Transverse colon (tissue), 4 donors: ENCODE measurements at regions of chr11 and their contacts with region 1.

Region 1: GRCh38 chr11:1541474-1542204 is 30.4 kb downstream of the DUSP8 start:
- DNase-seq: no peak
- H3K4me3 ChIP-seq: no peak overlapping the region
- H3K27ac ChIP-seq: no peak overlapping the region
- H3K4me1 ChIP-seq: peaks cover 0 to 17% (median 12%) of the 10 kb centered on the region in 4 donors
- H3K27me3 ChIP-seq: peaks cover 13% of the 10 kb centered on the region
- CTCF ChIP-seq: no peak
- EP300 ChIP-seq: no peak
- POLR2A ChIP-seq: no peak

Region 2: GRCh38 chr11:1628506-1629325 is 87.1 kb after region 1 on chr11:
- in situ Hi-C with region 1: no loop called
- intact Hi-C with region 1: loop called (anchors 2 kb)
- DNase-seq: peak; percentile 64
- H3K4me3 ChIP-seq: no peak overlapping the region
- H3K27ac ChIP-seq: no peak overlapping the region
- H3K4me1 ChIP-seq: peaks cover 0 to 7% (median 1%) of the 10 kb centered on the region in 4 donors
- H3K27me3 ChIP-seq: peaks cover 32% of the 10 kb centered on the region
- CTCF ChIP-seq: peak; percentile 83 to 96 (median 89)
- EP300 ChIP-seq: no peak
- POLR2A ChIP-seq: no peak

Region 3: GRCh38 chr11:2074266-2074825 is 532.7 kb after region 1 on chr11:
- in situ Hi-C with region 1: no loop called
- intact Hi-C with region 1: no loop called
- DNase-seq: no peak
- H3K4me3 ChIP-seq: no peak overlapping the region
- H3K27ac ChIP-seq: no peak overlapping the region
- H3K4me1 ChIP-seq: peaks cover 0 to 4% (median 0%) of the 10 kb centered on the region in 4 donors
- H3K27me3 ChIP-seq: peaks cover 10% of the 10 kb centered on the region
- CTCF ChIP-seq: no peak
- EP300 ChIP-seq: no peak
- POLR2A ChIP-seq: no peak

Region 4: GRCh38 chr11:3037040-3037944 is 1495.7 kb after region 1 on chr11:
- in situ Hi-C with region 1: no loop called
- intact Hi-C with region 1: no loop called
- DNase-seq: peak; percentile 82
- H3K4me3 ChIP-seq: no peak overlapping the region
- H3K27ac ChIP-seq: peak overlapping the region in 1 of 4 donors; percentile 8
- H3K4me1 ChIP-seq: peaks cover 0 to 14% (median 3%) of the 10 kb centered on the region in 4 donors
- H3K27me3 ChIP-seq: no peaks in the 10 kb centered on the region
- CTCF ChIP-seq: peak; percentile 77 to 86 (median 78)
- EP300 ChIP-seq: no peak
- POLR2A ChIP-seq: no peak